PC-9 (cell line): ENCODE measurements at regions of chr20 and their contacts with region 1.

Region 1: GRCh38 chr20:23119456-23120138 is 33.5 kb upstream of the CD93 start:
- DNase-seq: no peak
- H3K4me3 ChIP-seq: no peak overlapping the region
- H3K27ac ChIP-seq: no peak overlapping the region
- H3K4me1 ChIP-seq: 0 out of 2 replicates have a peak, but pooled peaks cover under 1% of the 10 kb centered on the region
- H3K27me3 ChIP-seq: no peaks in the 10 kb centered on the region
- CTCF ChIP-seq: no peak

Region 2: GRCh38 chr20:23147964-23148730 is 28.6 kb after region 1 on chr20:
- CTCF ChIA-PET with region 1: no interaction called
- POLR2A ChIA-PET with region 1: interaction called, 19 read pairs
- intact Hi-C with region 1: no loop called
- DNase-seq: peak; percentile 60 to 96
- H3K4me3 ChIP-seq: peak overlapping the region; percentile 36; the same call in 1 of the 2 replicates
- H3K27ac ChIP-seq: peak overlapping the region; percentile 97
- H3K4me1 ChIP-seq: peaks cover 97% of the 10 kb centered on the region
- H3K27me3 ChIP-seq: no peaks in the 10 kb centered on the region
- CTCF ChIP-seq: no peak